Posterior cingulate gyrus (tissue), 11 donors: ENCODE measurements at regions of chr1 and their contacts with region 1.

Region 1: GRCh38 chr1:30911046-30911954 is 2.7 kb upstream of the SDC3 start:
- DNase-seq: peak; percentile 71 to 98 (median 86)

Region 2: GRCh38 chr1:30727824-30728223 is 183.5 kb before region 1 on chr1:
- intact Hi-C with region 1: loop called (anchors 5 kb)
- DNase-seq: peak in 1 of 10 donors; percentile 54

Region 3: GRCh38 chr1:30779294-30780071 is 131.8 kb before region 1 on chr1:
- intact Hi-C with region 1: loop called (anchors 1 kb)
- DNase-seq: peak; percentile 69 to 98 (median 90)

Region 4: GRCh38 chr1:30801771-30802198 is 109.5 kb before region 1 on chr1:
- intact Hi-C with region 1: loop called (anchors 1 kb)
- DNase-seq: peak; percentile 79 to 98 (median 94)